Gastrocnemius medialis (tissue), 4 donors: ENCODE measurements at regions of chr18 and their contacts with region 1.

Region 1: GRCh38 chr18:10270151-10270571 is 184.3 kb upstream of the APCDD1 start:
- DNase-seq: no peak
- ATAC-seq: peak; percentile 54 to 65
- H3K4me3 ChIP-seq: no peak overlapping the region
- H3K27ac ChIP-seq: peak overlapping the region in 2 of 4 donors; percentile 21 to 28
- H3K4me1 ChIP-seq: no peaks in the 10 kb centered on the region
- H3K27me3 ChIP-seq: no peaks in the 10 kb centered on the region
- CTCF ChIP-seq: no peak
- POLR2A ChIP-seq: no peak

Region 2: DNA sequence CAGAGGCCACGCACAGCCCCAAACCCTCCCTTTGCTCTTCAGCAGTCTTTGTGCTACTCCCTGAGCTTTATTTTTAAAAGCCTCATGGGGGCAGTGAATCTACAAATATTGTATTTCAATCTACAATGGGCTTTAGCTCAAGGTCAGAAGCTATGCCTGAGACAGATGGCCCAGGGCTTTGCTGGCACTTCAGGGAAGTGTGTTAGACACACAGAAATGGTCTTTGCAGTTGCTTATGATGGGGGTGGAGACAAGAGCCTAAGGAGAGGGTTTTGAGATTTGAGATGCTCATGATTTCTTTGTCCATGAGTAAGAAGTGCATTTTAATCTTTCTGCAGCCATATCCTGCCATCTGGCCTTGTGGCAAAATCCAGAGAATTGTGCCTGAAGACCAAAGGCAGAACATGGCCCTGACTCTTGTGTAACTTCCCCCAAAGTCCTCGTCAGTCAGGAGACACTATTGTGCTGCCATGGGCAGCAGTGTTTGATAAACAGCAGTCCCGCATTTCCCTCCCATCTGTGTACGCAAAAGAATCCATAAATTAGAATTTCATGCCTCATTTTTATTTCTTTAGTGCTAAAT is 263.8 kb before region 1 on chr18:
- in situ Hi-C with region 1: no loop called
- intact Hi-C with region 1: no loop called
- DNase-seq: no peak
- ATAC-seq: no peak
- H3K4me3 ChIP-seq: no peak overlapping the region
- H3K27ac ChIP-seq: no peak overlapping the region
- H3K4me1 ChIP-seq: peaks cover 12 to 16% of the 10 kb centered on the region in 2 donors
- H3K27me3 ChIP-seq: no peaks in the 10 kb centered on the region
- CTCF ChIP-seq: no peak
- POLR2A ChIP-seq: no peak

Region 3: GRCh38 chr18:10169064-10169562 is 101.0 kb before region 1 on chr18:
- in situ Hi-C with region 1: loop called in 1 of 4 experiments (anchors 25 kb)
- intact Hi-C with region 1: no loop called
- DNase-seq: no peak
- ATAC-seq: no peak
- H3K4me3 ChIP-seq: no peak overlapping the region
- H3K27ac ChIP-seq: no peak overlapping the region
- H3K4me1 ChIP-seq: no peaks in the 10 kb centered on the region
- H3K27me3 ChIP-seq: no peaks in the 10 kb centered on the region
- CTCF ChIP-seq: no peak
- POLR2A ChIP-seq: no peak

Region 4: GRCh38 chr18:10588975-10589374 is 318.8 kb after region 1 on chr18:
- in situ Hi-C with region 1: no loop called
- intact Hi-C with region 1: no loop called
- DNase-seq: no peak
- ATAC-seq: peak in 1 of 2 donors; percentile 26
- H3K4me3 ChIP-seq: no peak overlapping the region
- H3K27ac ChIP-seq: no peak overlapping the region
- H3K4me1 ChIP-seq: no peaks in the 10 kb centered on the region
- H3K27me3 ChIP-seq: no peaks in the 10 kb centered on the region
- CTCF ChIP-seq: no peak
- POLR2A ChIP-seq: no peak